Natural killer cell (primary cell): ENCODE measurements at regions of chr1 and their contacts with region 1.

Region 1: DNA sequence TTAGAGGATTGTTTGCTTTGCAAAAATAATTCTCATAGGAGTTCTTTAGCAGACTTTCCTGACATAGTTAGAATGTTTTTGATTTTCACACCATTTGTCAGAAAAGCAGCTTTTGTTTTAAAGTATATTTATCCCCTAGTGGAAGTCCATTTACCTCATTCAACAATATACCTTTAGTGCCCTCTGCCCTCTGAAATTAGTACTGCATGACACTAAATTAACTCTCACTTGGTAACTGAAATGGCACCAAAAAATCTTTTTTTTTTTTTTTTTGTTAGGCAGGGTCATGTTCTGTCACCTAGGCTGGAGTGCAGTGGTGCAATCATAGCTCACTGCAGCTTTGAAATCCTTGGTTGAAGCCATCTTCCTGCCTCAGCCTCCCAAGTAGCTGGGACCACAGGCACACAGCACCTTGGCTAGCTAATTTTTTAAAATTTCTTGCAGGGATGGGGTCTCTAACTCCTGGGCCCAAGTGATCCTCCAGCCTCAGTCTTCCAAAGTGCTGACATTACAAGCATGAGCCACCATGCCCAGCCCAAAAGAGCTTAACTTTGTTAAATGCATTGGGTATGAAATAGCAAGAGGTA is 13.6 kb downstream of the LRRC42 start:
- DNase-seq: peak in 1 of 2 donors; percentile 72
- ATAC-seq: peak; percentile 78 to 90 (median 78)
- H3K4me3 ChIP-seq: no peak overlapping the region
- H3K4me3 Mint-ChIP-seq: no peak overlapping the region
- H3K27ac ChIP-seq: no peak overlapping the region
- H3K27ac Mint-ChIP-seq: no peak overlapping the region
- H3K4me1 ChIP-seq: no peaks in the 10 kb centered on the region
- H3K4me1 Mint-ChIP-seq: peaks cover 0 to 10% of the 10 kb centered on the region in 2 donors
- H3K27me3 ChIP-seq: no peaks in the 10 kb centered on the region
- H3K27me3 Mint-ChIP-seq: no peaks in the 10 kb centered on the region
- CTCF ChIP-seq: peak; percentile 76

Region 2: GRCh38 chr1:53860967-53861411 is 98.8 kb before region 1 on chr1:
- intact Hi-C with region 1: loop called (anchors 1 kb)
- DNase-seq: peak in 1 of 2 donors; percentile 81
- ATAC-seq: peak; percentile 61 to 76 (median 74)
- H3K4me3 ChIP-seq: no peak overlapping the region
- H3K4me3 Mint-ChIP-seq: no peak overlapping the region
- H3K27ac ChIP-seq: no peak overlapping the region
- H3K27ac Mint-ChIP-seq: peak overlapping the region in 1 of 2 donors; percentile 29
- H3K4me1 ChIP-seq: no peaks in the 10 kb centered on the region
- H3K4me1 Mint-ChIP-seq: peaks cover 0 to 6% of the 10 kb centered on the region in 2 donors
- H3K27me3 ChIP-seq: no peaks in the 10 kb centered on the region
- H3K27me3 Mint-ChIP-seq: no peaks in the 10 kb centered on the region
- CTCF ChIP-seq: peak; percentile 78

Region 3: DNA sequence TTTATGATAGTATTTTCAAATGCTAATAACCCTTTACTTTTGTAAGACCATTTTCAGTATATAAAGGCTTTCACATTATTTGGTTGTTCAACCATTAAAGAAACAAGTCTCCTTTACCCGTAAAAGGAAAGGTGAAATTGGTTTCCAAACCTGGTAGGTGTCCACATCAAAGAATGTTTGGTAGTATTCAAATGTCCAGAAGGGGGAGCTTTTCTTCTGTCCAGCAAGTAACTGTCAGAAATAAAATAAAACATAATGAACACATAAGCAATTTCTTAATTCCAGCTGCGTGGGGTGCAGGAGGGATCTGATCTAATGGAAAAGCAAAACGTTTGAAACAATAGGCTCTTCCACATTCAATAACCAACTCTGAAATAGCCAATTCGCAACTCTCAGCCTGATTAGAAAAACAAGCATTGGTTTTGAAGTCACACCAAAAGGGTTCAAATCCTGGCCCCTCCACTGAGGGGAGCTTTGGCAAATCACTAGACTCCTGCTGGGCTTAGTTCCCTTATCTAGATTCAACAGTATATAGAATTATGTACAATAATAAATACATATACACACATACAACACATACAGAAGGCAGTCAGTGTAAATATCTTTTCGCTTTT is 81.2 kb before region 1 on chr1:
- intact Hi-C with region 1: loop called (anchors 1 kb)
- DNase-seq: peak in 1 of 2 donors; percentile 46
- ATAC-seq: no peak
- H3K4me3 ChIP-seq: no peak overlapping the region
- H3K4me3 Mint-ChIP-seq: no peak overlapping the region
- H3K27ac ChIP-seq: no peak overlapping the region
- H3K27ac Mint-ChIP-seq: no peak overlapping the region
- H3K4me1 ChIP-seq: no peaks in the 10 kb centered on the region
- H3K4me1 Mint-ChIP-seq: peaks cover 0 to 6% of the 10 kb centered on the region in 2 donors
- H3K27me3 ChIP-seq: no peaks in the 10 kb centered on the region
- H3K27me3 Mint-ChIP-seq: no peaks in the 10 kb centered on the region
- CTCF ChIP-seq: peak; percentile 64